Heart left ventricle (tissue), 16 donors: ENCODE measurements at regions of chr3 and their contacts with region 1.

Region 1: DNA sequence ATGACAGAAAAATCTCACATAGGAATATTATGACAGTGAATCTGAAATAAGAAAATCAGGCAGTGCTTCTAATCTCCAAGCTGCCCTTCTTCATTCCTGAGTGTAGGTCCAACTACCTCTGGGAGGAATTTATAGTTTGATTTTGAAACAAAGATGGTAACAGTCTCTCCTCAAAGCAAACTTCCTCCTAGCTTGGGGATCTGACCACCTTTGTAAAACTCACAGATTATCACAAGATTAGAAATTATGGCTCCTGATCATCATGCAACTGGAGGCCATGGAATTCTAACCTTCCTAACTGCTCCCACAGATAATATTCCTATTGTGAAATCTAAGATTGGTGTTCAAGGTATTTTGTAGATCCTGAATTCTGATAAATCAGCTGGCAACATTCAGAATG is 7.4 kb downstream of the OR5H14 start:
- DNase-seq: no peak
- ATAC-seq: no peak
- H3K4me3 ChIP-seq: no peak overlapping the region
- H3K27ac ChIP-seq: no peak overlapping the region
- H3K4me1 ChIP-seq: no peaks in the 10 kb centered on the region
- H3K27me3 ChIP-seq: no peaks in the 10 kb centered on the region
- CTCF ChIP-seq: no peak
- POLR2A ChIP-seq: no peak

Region 2: GRCh38 chr3:98209244-98209643 is 54.6 kb after region 1 on chr3:
- intact Hi-C with region 1: loop called in 6 of 10 experiments (anchors 1 to 2 kb)
- DNase-seq: no peak
- ATAC-seq: no peak
- H3K4me3 ChIP-seq: no peak overlapping the region
- H3K27ac ChIP-seq: no peak overlapping the region
- H3K4me1 ChIP-seq: no peaks in the 10 kb centered on the region
- H3K27me3 ChIP-seq: no peaks in the 10 kb centered on the region
- CTCF ChIP-seq: no peak
- POLR2A ChIP-seq: no peak